Endothelial cell of umbilical vein (primary cell): ENCODE measurements at regions of chr11 and their contacts with region 1.

Region 1: DNA sequence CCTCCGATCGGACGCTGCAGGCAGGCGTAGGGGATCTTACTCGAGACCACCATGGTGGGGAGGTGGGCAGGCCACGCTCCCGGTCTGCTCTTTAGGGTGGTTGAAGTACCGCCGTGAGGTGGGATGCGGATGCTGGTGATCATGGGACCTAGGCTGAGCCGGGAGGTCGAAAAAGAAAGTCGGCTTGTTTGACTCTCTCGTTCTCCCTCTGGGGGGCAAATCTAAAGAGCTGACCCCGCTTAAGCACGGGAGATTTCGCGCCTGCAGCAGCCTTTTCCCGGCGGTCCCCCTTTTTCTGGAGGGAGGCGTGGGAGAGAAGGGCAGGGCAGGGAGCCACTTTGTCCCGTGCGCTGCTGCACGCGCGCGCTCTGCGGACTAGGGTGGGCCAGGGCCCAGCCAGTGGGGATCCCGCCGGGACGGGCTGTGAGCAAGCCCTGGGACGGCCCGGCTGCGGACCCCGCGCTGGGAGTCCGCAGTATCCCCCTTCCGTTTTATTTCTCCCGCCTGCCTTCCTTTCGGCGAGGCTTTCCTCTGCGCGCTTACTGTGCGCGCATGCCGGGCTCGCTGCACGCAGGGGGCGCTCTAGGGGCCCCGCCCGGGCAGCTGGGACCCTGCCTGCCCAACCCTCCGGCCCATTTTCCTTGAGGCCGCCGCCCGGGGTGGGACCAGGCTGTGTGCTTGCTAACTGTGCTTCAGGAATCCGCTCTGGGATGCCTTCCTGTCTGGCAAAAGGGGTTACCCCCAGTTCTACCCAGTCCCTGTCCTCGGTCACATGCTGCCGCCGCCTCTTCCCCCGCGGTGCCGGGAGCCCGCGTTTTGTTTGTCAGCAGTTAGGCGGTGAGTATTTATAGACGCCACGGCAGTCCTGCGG is 81.0 kb downstream of the PRR5L start:
- DNase-seq: peak; percentile 35
- H3K4me3 ChIP-seq: peak overlapping the region; percentile 53 to 74 (median 69)
- H3K27ac ChIP-seq: no peak overlapping the region
- H3K4me1 ChIP-seq: peaks cover 10% of the 10 kb centered on the region
- H3K27me3 ChIP-seq: peaks cover 19% of the 10 kb centered on the region in 2 experiments
- CTCF ChIP-seq: peak; percentile 75 to 81
- POLR2A ChIP-seq: no peak

Region 2: DNA sequence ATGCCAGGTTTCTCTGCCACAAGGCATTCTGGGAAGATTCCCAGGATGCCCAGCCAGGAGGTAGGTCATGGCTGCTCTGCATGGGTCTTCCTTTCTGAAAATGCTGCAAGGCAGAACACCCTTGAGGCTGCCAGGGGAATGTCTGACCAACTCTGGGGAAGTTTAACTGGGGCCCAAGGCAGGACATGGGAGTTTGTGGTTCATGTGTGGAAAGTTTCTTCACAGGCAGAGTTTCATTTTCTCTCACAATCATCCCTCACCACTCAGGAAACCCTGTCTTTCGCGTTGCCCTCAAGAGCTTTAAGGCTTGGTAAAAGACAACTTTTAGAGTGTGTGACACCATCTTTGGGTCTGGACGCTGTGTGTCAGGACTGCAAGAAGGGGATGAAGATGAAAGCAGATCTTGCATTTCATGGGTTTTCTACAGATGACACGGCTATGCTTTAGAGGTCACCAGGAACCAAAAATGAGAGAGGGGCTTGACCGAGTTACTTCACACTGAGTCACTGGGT is 1104.7 kb before region 1 on chr11:
- CTCF ChIA-PET with region 1: no interaction called
- POLR2A ChIA-PET with region 1: no interaction called
- dilution Hi-C with region 1: no loop called
- intact Hi-C with region 1: no loop called
- DNase-seq: no peak
- H3K4me3 ChIP-seq: no peak overlapping the region
- H3K27ac ChIP-seq: no peak overlapping the region
- H3K4me1 ChIP-seq: no peaks in the 10 kb centered on the region
- H3K27me3 ChIP-seq: peaks cover 0 to 14% of the 10 kb centered on the region in 2 experiments
- CTCF ChIP-seq: no peak
- POLR2A ChIP-seq: no peak

Region 3: DNA sequence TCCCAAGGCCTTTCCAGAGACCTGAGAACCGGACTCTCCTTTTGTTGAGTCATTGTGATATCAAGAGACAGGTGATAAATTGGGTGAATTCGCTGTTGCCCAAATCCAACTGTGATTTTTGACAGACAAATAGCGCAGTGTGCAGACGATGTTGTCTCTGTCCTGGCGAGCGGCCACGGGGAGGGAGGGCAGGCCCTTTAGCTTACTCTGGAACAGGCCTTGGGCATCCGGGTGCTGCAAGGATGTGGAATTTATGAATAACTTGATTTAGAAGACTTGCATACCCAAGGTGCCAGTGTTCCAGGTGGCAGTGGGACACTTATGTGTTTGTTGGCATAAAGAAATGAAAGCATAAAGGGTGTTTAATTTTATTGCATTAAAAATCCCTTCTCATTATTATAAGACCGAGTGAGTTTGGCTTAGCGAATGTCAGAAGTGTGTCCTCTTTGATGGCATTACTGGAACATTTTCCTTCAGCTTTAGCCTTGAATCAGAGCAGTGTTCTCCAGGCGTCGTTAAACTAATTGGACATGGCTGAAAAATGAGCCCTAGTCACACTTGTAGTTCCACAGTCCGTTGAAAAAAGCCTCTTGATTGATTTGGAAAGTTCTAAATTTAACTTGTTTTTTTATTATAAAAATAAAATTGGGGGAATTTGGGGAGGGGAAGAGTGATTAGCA is 423.9 kb before region 1 on chr11:
- CTCF ChIA-PET with region 1: no interaction called
- POLR2A ChIA-PET with region 1: no interaction called
- dilution Hi-C with region 1: no loop called
- intact Hi-C with region 1: no loop called
- DNase-seq: peak; percentile 42
- H3K4me3 ChIP-seq: no peak overlapping the region
- H3K27ac ChIP-seq: peak overlapping the region; percentile 35
- H3K4me1 ChIP-seq: peaks cover 31% of the 10 kb centered on the region
- H3K27me3 ChIP-seq: no peaks in the 10 kb centered on the region
- CTCF ChIP-seq: no peak
- POLR2A ChIP-seq: no peak

Region 4: DNA sequence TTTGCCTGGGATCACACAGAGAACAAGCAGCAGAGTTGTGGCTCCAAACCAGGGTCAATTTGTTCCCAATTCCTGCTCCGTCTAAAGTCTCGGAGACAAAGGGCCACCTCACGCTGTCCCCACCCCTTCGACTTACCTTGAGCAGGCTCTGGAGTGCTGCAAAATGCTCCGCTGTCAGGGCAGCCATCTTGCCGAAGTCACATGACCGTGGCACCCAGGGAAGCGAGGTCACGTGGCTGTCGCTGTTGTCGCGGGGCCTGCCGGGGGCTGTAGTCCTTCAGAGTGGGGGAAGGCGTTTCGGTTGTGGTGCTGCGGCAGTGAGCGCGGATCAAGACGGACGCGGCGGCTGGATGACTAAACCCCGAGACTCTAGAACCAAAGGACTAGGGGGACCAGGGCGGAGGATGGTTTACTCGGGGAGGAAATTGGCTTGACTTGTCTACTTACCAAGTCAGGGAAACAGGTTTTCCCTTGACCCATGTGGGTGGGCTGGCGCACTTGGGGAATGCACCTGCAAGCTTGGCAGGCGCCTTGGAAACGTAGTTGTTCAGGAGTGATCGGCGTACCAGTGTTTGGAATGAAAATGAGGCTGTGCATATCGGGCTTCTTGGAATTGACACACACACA is 87.8 kb before region 1 on chr11 and contains the start of gene COMMD9:
- CTCF ChIA-PET with region 1: interaction called, 31 read pairs
- POLR2A ChIA-PET with region 1: no interaction called
- dilution Hi-C with region 1: no loop called
- intact Hi-C with region 1: loop called (anchors 1 kb)
- DNase-seq: peak; percentile 93
- H3K4me3 ChIP-seq: peak within 1 kb of the TSS; percentile 73 to 95 (median 75)
- H3K27ac ChIP-seq: peak within 1 kb of the TSS; percentile 32
- H3K4me1 ChIP-seq: peaks cover 9% of the 10 kb centered on the region
- H3K27me3 ChIP-seq: no peaks in the 10 kb centered on the region
- CTCF ChIP-seq: no peak
- POLR2A ChIP-seq: peak; percentile 77
- total RNA-seq, gene COMMD9: 78.9 and 79.0 TPM in 2 replicates

Region 5: DNA sequence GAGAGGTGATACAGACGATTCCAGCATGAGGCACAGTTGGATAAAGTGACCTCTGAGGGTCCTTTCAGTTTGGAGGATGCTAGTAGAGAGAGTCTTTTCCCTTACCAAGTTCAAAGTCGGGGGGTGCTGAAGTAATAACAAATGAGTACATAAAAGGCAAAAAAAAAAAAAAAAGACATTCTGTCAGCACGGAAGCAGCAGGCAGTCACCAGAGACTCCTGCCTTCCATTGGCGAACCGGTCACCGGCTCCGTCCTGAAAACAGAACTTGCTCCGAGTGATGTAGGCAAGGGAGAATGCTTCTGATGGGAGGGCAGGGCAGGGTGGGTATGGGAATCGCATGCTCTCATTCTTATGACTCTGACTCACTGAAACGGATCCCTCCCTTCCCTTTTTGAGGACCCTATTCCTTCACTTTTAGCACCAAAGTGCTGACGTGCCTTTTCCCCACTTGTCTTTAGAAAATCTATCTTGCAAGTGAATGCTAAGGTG is 15.2 kb before region 1 on chr11:
- CTCF ChIA-PET with region 1: interaction called, 14 read pairs
- POLR2A ChIA-PET with region 1: no interaction called
- dilution Hi-C with region 1: no loop called
- intact Hi-C with region 1: no loop called
- DNase-seq: no peak
- H3K4me3 ChIP-seq: no peak overlapping the region
- H3K27ac ChIP-seq: no peak overlapping the region
- H3K4me1 ChIP-seq: peaks cover 16% of the 10 kb centered on the region
- H3K27me3 ChIP-seq: peaks cover 5 to 8% of the 10 kb centered on the region in 2 experiments
- CTCF ChIP-seq: no peak
- POLR2A ChIP-seq: no peak

Region 6: GRCh38 chr11:36411202-36411640 is 34.1 kb after region 1 on chr11:
- CTCF ChIA-PET with region 1: interaction called, 6 read pairs
- POLR2A ChIA-PET with region 1: no interaction called
- dilution Hi-C with region 1: no loop called
- intact Hi-C with region 1: loop called (anchors 2 kb)
- DNase-seq: peak; percentile 44
- H3K4me3 ChIP-seq: no peak overlapping the region
- H3K27ac ChIP-seq: peak overlapping the region; percentile 26
- H3K4me1 ChIP-seq: peaks cover 30% of the 10 kb centered on the region
- H3K27me3 ChIP-seq: no peaks in the 10 kb centered on the region
- CTCF ChIP-seq: no peak
- POLR2A ChIP-seq: no peak

Region 7: GRCh38 chr11:36469063-36469462 is 91.9 kb after region 1 on chr11:
- CTCF ChIA-PET with region 1: interaction called, 18 read pairs
- POLR2A ChIA-PET with region 1: no interaction called
- dilution Hi-C with region 1: no loop called
- intact Hi-C with region 1: no loop called
- DNase-seq: no peak
- H3K4me3 ChIP-seq: no peak overlapping the region
- H3K27ac ChIP-seq: no peak overlapping the region
- H3K4me1 ChIP-seq: no peaks in the 10 kb centered on the region
- H3K27me3 ChIP-seq: no peaks in the 10 kb centered on the region
- CTCF ChIP-seq: peak; percentile 7 to 14
- POLR2A ChIP-seq: no peak